Gastrocnemius medialis (tissue), 4 donors: ENCODE measurements at regions of chr1 and their contacts with region 1.

Region 1: DNA sequence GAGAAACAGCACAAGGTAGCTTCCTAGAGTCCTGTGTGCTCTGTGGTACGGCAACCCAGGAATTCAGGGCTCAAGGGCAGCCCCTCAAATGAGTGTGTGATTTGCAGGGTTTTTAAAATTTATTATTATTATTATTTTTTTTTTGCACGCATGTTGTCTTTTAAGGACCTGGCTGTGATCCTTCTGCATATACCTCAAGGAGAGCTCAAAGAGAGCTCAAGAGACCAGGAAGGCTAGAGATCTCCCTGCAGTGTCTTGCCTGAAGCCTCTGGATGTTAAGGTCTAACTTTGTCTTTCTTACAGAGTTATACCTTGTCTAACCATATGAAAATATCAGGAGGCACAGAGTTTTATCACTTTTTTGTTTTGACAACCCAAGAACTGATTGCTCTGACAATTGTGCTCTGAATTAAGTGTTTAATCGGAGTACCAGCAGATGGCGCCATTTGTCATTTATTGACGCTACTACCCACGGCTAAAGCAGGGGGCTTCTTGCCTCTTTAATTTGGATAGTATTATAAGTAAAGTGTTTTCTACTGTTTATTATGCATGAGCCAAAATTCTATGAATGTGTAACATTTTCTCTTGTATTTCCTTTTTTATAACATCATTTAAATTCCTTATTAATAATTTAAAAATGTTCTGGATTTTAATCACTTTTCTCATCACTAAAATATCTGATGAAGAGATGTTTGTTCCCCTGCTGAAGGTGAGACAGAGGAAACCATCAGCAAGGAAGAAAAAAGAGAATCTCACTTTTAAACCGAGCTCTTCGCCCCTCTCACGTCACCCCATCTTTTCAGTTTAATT is 35.8 kb upstream of the LMO4 start:
- DNase-seq: peak in 1 of 2 donors; percentile 16
- ATAC-seq: peak in 1 of 2 donors; percentile 53
- H3K4me3 ChIP-seq: no peak overlapping the region
- H3K27ac ChIP-seq: no peak overlapping the region
- H3K4me1 ChIP-seq: no peaks in the 10 kb centered on the region
- H3K27me3 ChIP-seq: no peaks in the 10 kb centered on the region
- CTCF ChIP-seq: peak; percentile 55 to 79 (median 68)
- POLR2A ChIP-seq: no peak

Region 2: GRCh38 chr1:87131809-87132283 is 161.0 kb before region 1 on chr1:
- in situ Hi-C with region 1: loop called in 2 of 4 experiments (anchors 25 kb)
- intact Hi-C with region 1: no loop called
- DNase-seq: peak; percentile 44 to 54
- ATAC-seq: peak; percentile 73 to 84
- H3K4me3 ChIP-seq: peak overlapping the region; percentile 48 to 75 (median 60)
- H3K27ac ChIP-seq: peak overlapping the region; percentile 37 to 56 (median 48)
- H3K4me1 ChIP-seq: no peaks in the 10 kb centered on the region
- H3K27me3 ChIP-seq: no peaks in the 10 kb centered on the region
- CTCF ChIP-seq: peak; percentile 44 to 91 (median 76)
- POLR2A ChIP-seq: no peak

Region 3: GRCh38 chr1:87274851-87275250 is 18.0 kb before region 1 on chr1:
- in situ Hi-C with region 1: no loop called
- intact Hi-C with region 1: no loop called
- DNase-seq: no peak
- ATAC-seq: no peak
- H3K4me3 ChIP-seq: no peak overlapping the region
- H3K27ac ChIP-seq: no peak overlapping the region
- H3K4me1 ChIP-seq: peaks cover 0 to 18% of the 10 kb centered on the region in 2 donors
- H3K27me3 ChIP-seq: no peaks in the 10 kb centered on the region
- CTCF ChIP-seq: no peak
- POLR2A ChIP-seq: no peak

Region 4: GRCh38 chr1:87523466-87523865 is 230.6 kb after region 1 on chr1:
- in situ Hi-C with region 1: no loop called
- intact Hi-C with region 1: loop called (anchors 10 kb)
- DNase-seq: no peak
- ATAC-seq: no peak
- H3K4me3 ChIP-seq: no peak overlapping the region
- H3K27ac ChIP-seq: peak overlapping the region in 1 of 4 donors; percentile 42
- H3K4me1 ChIP-seq: no peaks in the 10 kb centered on the region
- H3K27me3 ChIP-seq: no peaks in the 10 kb centered on the region
- CTCF ChIP-seq: no peak
- POLR2A ChIP-seq: no peak

Region 5: DNA sequence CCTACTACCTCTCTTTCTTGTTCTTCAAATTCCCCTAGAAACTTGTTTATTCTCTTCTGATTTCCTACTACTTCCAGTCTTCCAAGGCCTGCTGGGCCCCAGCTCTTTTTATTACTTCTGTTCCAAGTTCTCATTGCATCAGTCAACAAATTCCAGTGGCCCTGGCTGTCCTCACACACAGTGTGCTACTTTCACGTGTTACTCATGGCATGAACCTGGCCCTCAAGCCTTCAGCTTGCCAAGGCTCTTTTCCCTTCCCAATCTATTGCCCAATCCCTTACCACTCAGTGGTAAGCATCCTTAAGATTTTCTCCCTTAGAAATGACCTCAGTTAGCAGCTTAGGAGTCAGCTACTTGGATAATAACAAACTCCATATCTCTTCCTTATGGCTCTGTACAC is 649.3 kb after region 1 on chr1:
- in situ Hi-C with region 1: loop called in 1 of 4 experiments (anchors 10 kb)
- intact Hi-C with region 1: no loop called
- DNase-seq: peak; percentile 12 to 63
- ATAC-seq: peak; percentile 67 to 87
- H3K4me3 ChIP-seq: no peak overlapping the region
- H3K27ac ChIP-seq: no peak overlapping the region
- H3K4me1 ChIP-seq: no peaks in the 10 kb centered on the region
- H3K27me3 ChIP-seq: no peaks in the 10 kb centered on the region
- CTCF ChIP-seq: no peak
- POLR2A ChIP-seq: no peak

Region 6: DNA sequence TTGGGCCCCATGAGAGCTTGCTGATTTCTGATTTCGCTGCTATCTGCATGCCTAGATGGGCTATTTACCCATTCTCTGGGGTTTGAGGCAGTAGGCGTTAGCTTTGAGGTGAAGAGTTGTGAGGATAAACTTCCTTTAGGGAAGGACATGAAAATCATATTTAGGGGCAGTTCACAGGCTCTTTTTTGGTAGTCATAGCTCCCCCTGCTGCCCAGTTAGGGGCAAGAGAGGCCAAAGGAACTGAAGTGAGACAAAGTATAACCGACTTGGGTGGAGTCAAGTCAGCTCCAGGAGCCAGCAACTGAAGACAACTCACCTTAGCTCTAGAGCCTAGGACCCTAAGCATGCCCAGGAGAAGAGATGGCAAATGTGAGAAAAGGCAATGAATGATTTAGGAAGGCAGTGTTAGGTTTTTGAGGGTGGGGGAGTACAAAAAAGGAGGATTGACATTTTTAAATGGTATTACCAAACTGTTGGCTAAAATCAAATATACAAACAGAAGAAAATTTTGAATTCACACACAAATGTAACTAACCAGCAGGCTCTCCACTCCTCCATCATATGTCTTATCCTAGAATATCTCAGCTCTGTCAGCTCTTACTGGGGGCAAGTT is 660.9 kb after region 1 on chr1:
- in situ Hi-C with region 1: loop called in 3 of 4 experiments (anchors 10 to 25 kb)
- intact Hi-C with region 1: loop called (anchors 1 kb)
- DNase-seq: peak; percentile 7 to 48
- ATAC-seq: peak; percentile 65 to 69
- H3K4me3 ChIP-seq: no peak overlapping the region
- H3K27ac ChIP-seq: no peak overlapping the region
- H3K4me1 ChIP-seq: no peaks in the 10 kb centered on the region
- H3K27me3 ChIP-seq: no peaks in the 10 kb centered on the region
- CTCF ChIP-seq: peak; percentile 30 to 69 (median 64)
- POLR2A ChIP-seq: no peak

Region 7: GRCh38 chr1:88061492-88062177 is 768.7 kb after region 1 on chr1:
- in situ Hi-C with region 1: no loop called
- intact Hi-C with region 1: loop called (anchors 10 kb)
- DNase-seq: no peak
- ATAC-seq: no peak
- H3K4me3 ChIP-seq: no peak overlapping the region
- H3K27ac ChIP-seq: no peak overlapping the region
- H3K4me1 ChIP-seq: no peaks in the 10 kb centered on the region
- H3K27me3 ChIP-seq: no peaks in the 10 kb centered on the region
- CTCF ChIP-seq: peak in 4 of 5 experiments; percentile 26 to 58 (median 32)
- POLR2A ChIP-seq: no peak